ENCODE measurements at regions of chr22 and their contacts with region 1.

Region 1: GRCh38 chr22:46006379-46007002 is 29.5 kb upstream of the WNT7B start:
- DNase-seq: peak; percentile 98
- H3K4me3 ChIP-seq: peak overlapping the region in 5 of 8 donors; percentile 15 to 49 (median 20)
- H3K27ac ChIP-seq: peak overlapping the region; percentile 73 to 90 (median 84)
- H3K4me1 ChIP-seq: peaks cover 30 to 87% (median 60%) of the 10 kb centered on the region in 6 donors
- H3K27me3 ChIP-seq: peaks cover 0 to 9% (median 0%) of the 10 kb centered on the region in 7 donors
- CTCF ChIP-seq: peak; percentile 93 to 98 (median 97)
- POLR2A ChIP-seq: no peak

Region 2: DNA sequence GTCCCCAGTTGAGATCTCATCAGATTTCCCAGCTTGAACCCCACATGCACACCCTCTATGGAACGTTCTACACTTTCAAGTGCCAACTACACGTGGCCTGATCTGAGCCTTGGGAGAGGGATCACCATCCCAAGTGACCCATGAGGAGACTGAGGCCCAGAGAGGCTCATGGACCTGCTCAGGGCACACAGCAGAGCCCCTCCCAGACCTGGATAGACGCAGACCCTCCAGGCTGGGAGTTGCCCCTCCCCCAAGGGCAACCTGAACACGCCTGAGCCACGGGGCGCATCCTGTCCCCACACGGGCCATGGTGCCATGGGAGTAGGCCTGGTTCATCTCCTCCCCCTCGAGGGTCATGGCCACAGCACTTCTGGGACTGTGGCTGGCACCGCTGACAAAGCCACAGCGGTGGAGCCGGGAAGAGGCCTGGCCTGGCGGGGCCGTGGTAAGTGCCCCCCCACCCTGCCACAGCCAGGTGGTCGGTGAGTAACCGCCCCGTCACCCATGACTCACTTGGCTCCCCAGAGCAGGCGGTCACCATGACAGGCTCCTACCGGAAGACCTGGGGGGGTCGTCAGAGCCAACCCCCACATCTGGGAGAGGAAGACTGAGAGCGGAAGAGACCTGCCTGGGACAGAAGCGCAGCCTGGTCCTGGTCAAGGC is 37.6 kb before region 1 on chr22:
- intact Hi-C with region 1: no loop called
- DNase-seq: no peak
- H3K4me3 ChIP-seq: no peak overlapping the region
- H3K27ac ChIP-seq: no peak overlapping the region
- H3K4me1 ChIP-seq: peaks cover 14 to 27% (median 19%) of the 10 kb centered on the region in 6 donors
- H3K27me3 ChIP-seq: peaks cover 0 to 100% (median 78%) of the 10 kb centered on the region in 7 donors
- CTCF ChIP-seq: no peak
- POLR2A ChIP-seq: no peak

Region 3: DNA sequence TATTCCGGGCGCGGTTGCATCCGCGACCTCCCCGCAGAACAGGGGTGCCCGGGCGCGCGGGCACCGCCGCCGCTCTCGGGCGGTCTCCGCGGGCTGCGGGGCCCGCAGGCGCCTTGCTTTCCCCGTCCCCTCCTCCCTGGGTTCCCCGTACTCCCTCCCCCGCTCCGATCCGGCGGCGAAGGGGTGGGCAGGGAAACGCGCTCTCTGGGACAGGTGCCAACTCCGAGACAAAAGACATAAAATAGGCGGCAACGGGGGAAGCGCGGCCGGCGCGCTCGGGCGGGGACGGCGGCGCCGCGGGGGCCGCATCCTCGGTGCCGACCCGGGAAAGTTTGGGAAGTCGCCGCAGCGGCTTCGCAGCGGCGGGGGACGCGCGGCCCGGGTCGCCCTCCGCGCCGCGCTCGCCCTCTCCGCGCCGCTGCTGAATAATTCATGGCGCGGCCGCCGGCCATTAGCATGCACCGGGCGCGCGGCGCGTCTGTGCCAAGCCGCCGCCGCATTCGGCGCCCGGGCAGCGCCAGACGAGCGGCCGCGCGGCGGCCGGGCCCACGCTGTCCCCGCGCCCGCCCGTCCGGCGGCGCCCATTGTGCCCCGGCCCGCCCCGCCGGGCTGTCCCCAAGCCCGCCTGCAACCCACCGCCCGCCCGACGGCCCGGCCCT is 65.1 kb after region 1 on chr22:
- intact Hi-C with region 1: loop called (anchors 10 kb)
- DNase-seq: peak; percentile 92
- H3K4me3 ChIP-seq: peak overlapping the region; percentile 50 to 97 (median 76)
- H3K27ac ChIP-seq: peak overlapping the region; percentile 80 to 98 (median 94)
- H3K4me1 ChIP-seq: peaks cover 6 to 87% (median 82%) of the 10 kb centered on the region in 6 donors
- H3K27me3 ChIP-seq: peaks cover 0 to 3% (median 0%) of the 10 kb centered on the region in 7 donors
- CTCF ChIP-seq: no peak
- POLR2A ChIP-seq: peak in 1 of 3 donors; percentile 32

Region 4: DNA sequence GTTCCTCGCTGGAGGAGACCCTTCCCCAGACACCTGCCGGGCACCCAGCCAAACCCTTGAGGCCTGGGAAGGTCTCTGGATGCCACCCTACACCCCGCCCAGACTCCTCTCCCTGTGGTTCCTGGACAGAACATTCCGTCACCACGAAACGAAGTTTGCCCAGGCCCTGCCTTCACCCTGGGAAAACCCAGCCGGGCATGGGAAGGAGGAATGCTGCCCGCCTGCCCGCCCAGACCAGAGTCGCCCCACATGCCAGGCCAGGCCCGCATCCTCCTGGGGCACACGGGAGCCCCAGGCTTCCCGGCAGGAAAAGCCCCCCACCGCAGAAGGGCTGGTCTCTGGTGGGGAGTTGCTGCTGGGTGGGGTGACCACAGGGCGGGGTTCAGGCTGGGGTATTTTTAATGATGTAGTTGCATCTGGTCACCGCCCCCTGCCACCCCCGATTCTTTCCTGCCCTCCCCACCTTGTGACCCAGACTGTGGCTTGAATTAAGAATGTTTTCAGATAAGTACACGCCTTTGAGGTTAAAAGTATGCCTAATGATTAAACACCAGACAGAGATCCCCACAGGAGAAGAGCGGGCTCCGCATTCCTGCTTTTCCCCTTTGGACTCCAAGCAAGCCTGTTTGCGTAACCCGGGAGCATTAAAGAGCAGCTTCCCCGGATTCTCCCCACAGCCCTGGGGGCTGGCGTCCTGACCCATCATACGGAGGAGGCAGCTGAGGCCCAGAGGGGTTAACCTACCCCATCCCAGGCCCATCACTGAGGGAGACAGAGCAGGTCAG is 99.2 kb after region 1 on chr22:
- intact Hi-C with region 1: no loop called
- DNase-seq: no peak
- H3K4me3 ChIP-seq: no peak overlapping the region
- H3K27ac ChIP-seq: peak overlapping the region; percentile 51 to 98 (median 81)
- H3K4me1 ChIP-seq: peaks cover 40 to 100% (median 88%) of the 10 kb centered on the region in 6 donors
- H3K27me3 ChIP-seq: no peaks in the 10 kb centered on the region
- CTCF ChIP-seq: no peak
- POLR2A ChIP-seq: no peak

Region 5: GRCh38 chr22:46116491-46116958 is 110.0 kb after region 1 on chr22:
- intact Hi-C with region 1: loop called (anchors 2 kb)
- DNase-seq: peak; percentile 97
- H3K4me3 ChIP-seq: no peak overlapping the region
- H3K27ac ChIP-seq: peak overlapping the region in 6 of 8 donors; percentile 43 to 97 (median 66)
- H3K4me1 ChIP-seq: peaks cover 4 to 93% (median 54%) of the 10 kb centered on the region in 6 donors
- H3K27me3 ChIP-seq: no peaks in the 10 kb centered on the region
- CTCF ChIP-seq: peak; percentile 86 to 99 (median 96)
- POLR2A ChIP-seq: no peak